ENCODE measurements at regions of chr15 and their contacts with region 1.

Region 1: DNA sequence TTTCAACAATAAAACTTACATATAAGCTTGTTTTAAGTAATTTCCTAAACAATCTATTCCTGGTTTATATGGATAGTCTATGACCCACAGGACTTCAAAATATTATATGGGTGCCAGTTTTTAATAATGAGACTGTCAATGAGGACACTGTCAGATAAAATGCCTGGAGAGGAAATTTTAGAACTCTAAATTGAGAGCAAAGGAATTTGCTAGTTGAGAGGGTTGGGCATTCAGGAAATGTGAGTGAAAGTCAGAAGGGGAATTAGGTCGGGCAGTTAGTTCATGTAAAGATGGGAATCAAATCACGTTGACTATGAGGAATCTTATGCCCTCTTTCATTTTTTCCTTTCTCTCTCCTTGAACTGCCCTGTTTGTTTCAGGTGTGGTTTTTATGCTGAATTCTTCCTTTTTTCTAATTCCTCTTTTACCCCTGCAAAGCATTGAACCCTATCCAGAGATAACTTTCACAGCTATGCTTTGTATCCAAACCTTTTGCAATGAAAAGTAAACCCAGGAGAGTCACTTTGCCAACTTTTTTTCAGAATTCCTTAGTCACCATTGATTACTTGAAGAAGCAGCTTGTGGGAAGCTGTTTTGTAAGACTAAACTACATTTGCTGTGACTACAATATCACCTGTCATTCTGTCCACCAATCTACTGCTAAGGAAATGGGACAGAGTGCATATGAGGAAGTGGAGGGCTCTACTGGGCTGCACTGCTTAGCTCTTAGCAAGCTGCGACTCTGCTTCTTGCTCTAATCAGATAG is 27.8 kb downstream of the CHP1 start:
- DNase-seq: peak; percentile 24
- H3K4me3 Mint-ChIP-seq: peak overlapping the region; percentile 38
- H3K27ac Mint-ChIP-seq: peak overlapping the region; percentile 96
- H3K4me1 Mint-ChIP-seq: peaks cover 18% of the 10 kb centered on the region
- H3K27me3 Mint-ChIP-seq: no peaks in the 10 kb centered on the region
- CTCF ChIP-seq: no peak

Region 2: DNA sequence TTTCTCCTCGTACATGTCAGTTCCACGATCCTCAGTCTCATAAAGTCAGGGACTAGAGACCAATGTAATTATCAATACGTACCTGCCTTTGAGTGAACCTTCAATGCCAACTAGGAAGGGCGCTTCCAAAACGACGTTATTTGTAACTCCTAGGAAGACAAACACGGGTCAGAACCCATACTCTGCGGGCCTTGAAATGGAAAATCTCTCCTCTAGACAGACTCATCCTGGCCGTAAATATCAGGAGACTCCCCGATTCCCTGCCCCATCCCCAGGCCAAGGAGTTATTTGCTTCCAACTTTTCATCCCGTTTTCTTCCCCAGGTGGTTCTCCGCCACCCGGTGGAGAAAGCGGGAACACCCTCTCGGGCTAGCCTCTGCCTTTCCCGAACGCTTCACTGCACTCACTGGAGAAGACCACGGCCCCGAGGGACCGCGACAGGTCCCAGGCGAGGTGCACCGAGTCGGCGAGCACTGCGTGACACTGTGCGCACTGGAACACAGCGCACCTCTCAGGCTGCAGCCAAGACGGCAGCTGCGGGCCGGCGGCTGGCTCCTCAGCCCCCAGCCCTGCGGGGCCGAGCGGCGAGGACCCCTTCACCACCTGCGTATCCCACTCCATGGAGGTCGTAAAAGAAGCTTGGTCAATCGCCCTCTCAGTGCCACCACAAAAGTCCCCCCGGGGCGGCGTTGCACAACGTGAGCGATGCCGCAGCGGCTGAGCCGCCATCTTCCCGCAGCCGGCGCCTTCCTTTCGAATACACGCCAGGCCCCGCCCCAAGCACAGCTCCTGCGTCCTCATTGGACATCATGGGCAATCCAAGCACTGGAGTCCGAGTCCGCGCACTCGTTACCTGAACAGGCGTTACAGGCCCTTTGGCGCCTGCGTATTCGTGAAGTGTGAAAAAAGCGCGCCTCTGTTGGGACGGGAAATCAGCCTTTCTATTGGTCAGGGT is 73.2 kb after region 1 on chr15 and contains the start of gene OIP5:
- CTCF ChIA-PET with region 1: no interaction called
- intact Hi-C with region 1: loop called (anchors 10 kb)
- DNase-seq: peak; percentile 90
- H3K4me3 Mint-ChIP-seq: peak within 1 kb of the TSS; percentile 97
- H3K27ac Mint-ChIP-seq: peak within 1 kb of the TSS; percentile 87
- H3K4me1 Mint-ChIP-seq: peaks cover 2% of the 10 kb centered on the region
- H3K27me3 Mint-ChIP-seq: no peaks in the 10 kb centered on the region
- CTCF ChIP-seq: no peak
- total RNA-seq, gene OIP5: 8.0 and 8.5 TPM in 2 replicates

Measured in Calu3 (cell line).